ENCODE measurements at regions of chr1 and their contacts with region 1.

Region 1: DNA sequence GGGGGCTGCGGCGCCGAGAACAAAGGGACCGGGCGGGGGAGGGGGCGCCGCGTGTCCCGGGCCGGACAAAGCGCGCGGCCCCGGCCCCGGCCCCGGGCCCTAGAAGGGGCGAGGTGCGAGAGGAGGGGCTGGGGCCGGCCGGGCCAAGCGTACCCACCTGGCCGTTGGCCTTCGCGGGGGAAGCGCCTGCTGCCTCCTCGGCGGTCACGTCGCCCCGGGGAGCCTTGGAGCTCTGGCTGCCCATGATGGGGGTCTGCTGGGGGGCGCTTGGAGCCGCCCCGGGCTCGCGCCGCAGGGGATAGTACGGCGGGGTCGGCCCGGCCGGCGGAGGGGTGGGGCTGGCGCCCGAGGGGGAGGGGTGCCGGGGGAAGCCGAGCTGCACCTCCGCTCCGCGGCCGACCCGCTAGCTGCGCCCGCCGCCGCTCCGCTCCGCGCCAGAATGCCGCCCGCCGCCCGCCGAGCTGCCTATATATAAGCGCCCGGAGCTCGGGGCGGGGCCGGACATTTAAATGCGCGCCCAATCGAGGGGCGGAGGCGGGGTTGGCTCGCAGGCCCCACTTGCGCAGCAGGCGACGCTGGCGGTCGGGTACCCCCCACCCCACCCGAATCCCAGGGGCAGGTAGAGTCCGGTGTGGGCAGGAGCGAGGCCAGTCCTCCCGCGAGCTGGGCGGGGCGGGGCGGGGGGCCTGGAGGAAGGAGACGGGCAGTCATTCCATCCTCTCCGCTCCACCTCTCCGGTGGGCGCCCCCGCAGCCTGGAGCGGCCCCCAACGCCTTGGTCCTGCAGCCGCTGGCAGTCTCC is at the start of gene MARCKSL1:
- DNase-seq: peak; percentile 82
- H3K4me3 Mint-ChIP-seq: peak within 1 kb of the TSS; percentile 79
- H3K27ac Mint-ChIP-seq: peak within 1 kb of the TSS; percentile 13
- H3K4me1 Mint-ChIP-seq: peaks cover 37% of the 10 kb centered on the region
- H3K27me3 Mint-ChIP-seq: peaks cover 13% of the 10 kb centered on the region
- total RNA-seq, gene MARCKSL1: 26.4 to 27.9 TPM

Region 2: GRCh38 chr1:32291708-32292492 is 44.1 kb before region 1 on chr1 and contains the start of gene HDAC1:
- CTCF ChIA-PET with region 1: no interaction called
- POLR2A ChIA-PET with region 1: interaction called, 21 read pairs
- DNase-seq: peak; percentile 98
- H3K4me3 Mint-ChIP-seq: peak within 1 kb of the TSS; percentile 91
- H3K27ac Mint-ChIP-seq: peak within 1 kb of the TSS; percentile 84
- H3K4me1 Mint-ChIP-seq: peaks cover 53% of the 10 kb centered on the region
- H3K27me3 Mint-ChIP-seq: no peaks in the 10 kb centered on the region
- total RNA-seq, gene HDAC1: 180 to 185 TPM

Region 3: GRCh38 chr1:32321712-32322291 is 14.2 kb before region 1 on chr1:
- CTCF ChIA-PET with region 1: interaction called, 9 read pairs
- POLR2A ChIA-PET with region 1: interaction called, 41 read pairs
- DNase-seq: peak; percentile 53
- H3K4me3 Mint-ChIP-seq: peak overlapping the region; percentile 57
- H3K27ac Mint-ChIP-seq: peak overlapping the region; percentile 91
- H3K4me1 Mint-ChIP-seq: peaks cover 58% of the 10 kb centered on the region
- H3K27me3 Mint-ChIP-seq: no peaks in the 10 kb centered on the region

Region 4: DNA sequence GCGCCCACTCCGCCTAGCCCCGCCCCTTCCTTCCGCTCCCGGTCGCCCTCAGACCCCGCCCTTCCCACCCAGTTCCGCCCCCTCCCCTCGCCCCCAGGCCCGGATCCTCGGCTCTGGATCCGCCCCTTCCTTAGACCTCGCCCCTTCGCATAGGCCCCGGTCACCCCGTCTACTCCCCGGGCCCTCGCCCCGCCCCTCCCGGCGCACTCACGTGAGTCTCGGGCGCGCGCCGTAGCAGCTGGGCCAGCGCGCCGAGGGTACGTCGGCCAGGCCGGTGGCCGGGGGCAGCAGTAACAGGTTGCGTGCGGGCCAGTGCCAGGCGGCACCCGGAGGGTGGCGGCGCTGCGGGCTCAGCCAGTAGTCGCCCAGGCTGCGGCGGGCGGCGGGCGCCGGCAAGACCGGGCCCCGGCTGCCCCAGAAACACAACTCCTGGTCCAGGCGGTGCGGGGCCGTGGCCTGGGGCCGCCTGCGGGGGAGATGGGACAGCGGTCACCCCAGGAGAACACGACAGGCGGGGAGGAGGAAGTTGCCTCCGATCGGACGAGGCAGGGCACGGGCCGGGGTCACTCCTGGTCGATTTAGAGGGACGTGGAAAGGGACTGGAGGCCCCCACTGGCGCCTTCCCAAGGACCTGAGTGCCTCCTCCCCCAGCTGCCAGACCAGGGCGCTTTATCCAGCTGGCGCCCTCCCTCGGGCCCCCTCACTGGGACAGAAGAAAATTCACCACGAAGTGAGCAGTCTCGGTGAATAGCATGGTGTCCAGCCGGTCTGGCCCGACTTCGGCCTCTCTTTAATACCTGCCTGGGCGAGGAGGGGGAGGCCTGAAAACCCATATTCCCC is 15.6 kb after region 1 on chr1:
- CTCF ChIA-PET with region 1: interaction called, 16 read pairs
- POLR2A ChIA-PET with region 1: interaction called, 34 read pairs
- DNase-seq: peak; percentile 93
- H3K4me3 Mint-ChIP-seq: peak overlapping the region; percentile 77
- H3K27ac Mint-ChIP-seq: peak overlapping the region; percentile 67
- H3K4me1 Mint-ChIP-seq: peaks cover 45% of the 10 kb centered on the region
- H3K27me3 Mint-ChIP-seq: peaks cover 5% of the 10 kb centered on the region

Region 5: DNA sequence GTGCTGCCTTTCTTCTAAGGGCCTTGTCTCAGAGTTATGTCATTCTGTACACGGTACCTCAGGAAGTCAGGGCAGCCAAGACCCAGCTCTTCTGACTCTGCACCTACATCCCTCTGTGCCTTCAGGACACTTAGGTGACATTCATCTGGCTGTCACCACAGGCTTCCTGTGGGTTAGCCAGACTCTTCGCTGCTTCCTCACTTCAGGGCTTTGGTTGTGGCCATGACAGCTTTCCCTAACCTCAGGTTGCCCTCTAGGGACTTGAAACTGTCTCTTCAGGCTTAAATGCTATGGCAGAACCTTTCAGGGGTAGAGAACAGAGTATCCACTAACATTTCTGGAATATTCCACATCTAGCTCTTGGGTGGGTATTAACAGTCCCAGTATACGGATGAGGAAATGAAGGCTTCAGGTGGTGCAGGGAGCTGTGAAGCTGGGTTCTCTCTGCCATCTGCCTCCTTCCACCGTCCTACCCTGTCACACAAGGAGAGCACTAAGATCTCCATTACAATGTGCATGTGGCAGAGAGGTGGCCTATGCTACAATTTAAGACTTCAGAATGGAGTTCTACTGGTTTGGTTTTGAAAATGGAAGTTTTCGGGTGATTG is 36.3 kb after region 1 on chr1:
- CTCF ChIA-PET with region 1: interaction called, 4 read pairs
- POLR2A ChIA-PET with region 1: interaction called, 11 read pairs
- DNase-seq: peak; percentile 74
- H3K4me3 Mint-ChIP-seq: no peak overlapping the region
- H3K27ac Mint-ChIP-seq: peak overlapping the region; percentile 33
- H3K4me1 Mint-ChIP-seq: peaks cover 18% of the 10 kb centered on the region
- H3K27me3 Mint-ChIP-seq: no peaks in the 10 kb centered on the region

Measured in activated CD4-positive, alpha-beta memory T cell treated with anti-CD3 and anti-CD28 coated beads, Interleukin-2, amount 10 ng/mL, durations not matched to agents 7 days and 5 days (primary cell).